Left ventricle myocardium superior (tissue), 1 donor: ENCODE measurements at regions of chr5 and their contacts with region 1.

Region 1: DNA sequence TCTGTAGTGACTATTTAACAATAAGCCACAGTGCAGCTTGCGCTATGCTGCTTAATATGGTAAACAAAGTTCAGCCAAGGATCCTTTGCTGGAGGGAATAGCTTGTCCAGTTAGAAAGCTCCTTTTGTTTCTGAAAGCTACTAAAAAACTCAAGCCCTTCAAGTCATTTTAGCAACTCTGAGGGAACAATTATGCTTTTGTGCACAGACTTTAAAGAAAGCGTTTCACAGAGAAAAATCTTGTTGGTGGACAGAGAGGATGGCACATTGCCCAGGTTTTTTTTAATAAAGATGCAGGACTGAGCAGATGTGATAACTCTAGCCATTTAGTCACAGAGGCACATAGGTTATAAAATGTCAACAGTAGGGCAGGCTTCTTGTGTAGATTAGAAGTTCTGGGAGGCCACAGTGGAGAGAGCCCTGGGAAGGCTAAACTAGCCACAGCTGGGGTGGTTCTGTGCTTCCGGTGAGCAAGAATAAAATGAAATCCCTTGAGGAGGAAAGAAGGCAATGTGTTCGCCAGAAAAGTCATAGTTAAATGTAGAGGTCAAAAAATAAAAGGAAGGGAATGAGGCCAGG is 63.4 kb downstream of the ALDH7A1 start:
- DNase-seq: no peak
- ATAC-seq: peak; percentile 93

Region 2: GRCh38 chr5:126414874-126415502 is 116.6 kb before region 1 on chr5:
- intact Hi-C with region 1: loop called (anchors 10 kb)
- DNase-seq: no peak
- ATAC-seq: peak; percentile 98

Region 3: DNA sequence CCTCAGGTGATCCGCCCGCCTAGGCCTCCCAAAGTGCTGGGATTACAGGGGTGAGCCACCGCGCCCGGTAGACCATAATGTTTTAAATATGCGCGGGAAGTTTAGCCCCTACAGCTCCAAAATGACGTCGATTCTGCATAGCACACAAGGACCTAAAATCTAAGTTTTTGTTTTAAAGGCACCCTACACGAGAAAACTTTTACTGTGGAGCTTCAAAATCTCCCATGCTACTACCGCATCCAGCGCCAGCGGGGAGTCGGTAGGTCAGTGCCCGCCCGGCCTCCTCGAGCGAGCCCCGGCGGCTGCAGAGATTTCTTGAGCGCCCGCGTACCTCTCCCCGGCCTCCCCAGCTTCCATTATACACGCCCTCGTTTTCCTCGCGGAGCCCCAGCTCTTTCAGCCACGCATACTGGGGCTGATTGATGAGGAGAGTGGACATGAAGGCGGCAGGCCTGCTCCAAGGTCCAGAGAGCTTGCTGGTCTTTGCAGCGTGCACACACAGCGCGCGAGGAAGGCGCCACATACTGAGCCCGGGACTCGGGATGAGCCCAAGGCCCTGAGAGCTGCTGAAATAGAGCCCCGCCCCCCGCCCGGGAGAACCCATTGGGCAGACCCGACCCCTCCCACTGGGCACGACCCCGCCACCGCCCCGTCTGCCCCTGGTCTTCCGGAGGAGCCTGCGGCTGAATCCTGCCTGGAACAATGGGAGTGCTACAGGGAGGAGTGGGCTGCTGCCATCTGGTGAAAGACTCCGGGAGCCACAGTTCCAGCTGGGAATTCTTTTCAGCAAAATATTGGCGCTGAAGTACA is 63.2 kb after region 1 on chr5 and contains the start of gene ALDH7A1:
- intact Hi-C with region 1: no loop called
- DNase-seq: peak; percentile 91
- ATAC-seq: peak; percentile 97
- total RNA-seq, gene ALDH7A1: 33.7 TPM